ENCODE measurements at regions of chr14 and their contacts with region 1.

Region 1: DNA sequence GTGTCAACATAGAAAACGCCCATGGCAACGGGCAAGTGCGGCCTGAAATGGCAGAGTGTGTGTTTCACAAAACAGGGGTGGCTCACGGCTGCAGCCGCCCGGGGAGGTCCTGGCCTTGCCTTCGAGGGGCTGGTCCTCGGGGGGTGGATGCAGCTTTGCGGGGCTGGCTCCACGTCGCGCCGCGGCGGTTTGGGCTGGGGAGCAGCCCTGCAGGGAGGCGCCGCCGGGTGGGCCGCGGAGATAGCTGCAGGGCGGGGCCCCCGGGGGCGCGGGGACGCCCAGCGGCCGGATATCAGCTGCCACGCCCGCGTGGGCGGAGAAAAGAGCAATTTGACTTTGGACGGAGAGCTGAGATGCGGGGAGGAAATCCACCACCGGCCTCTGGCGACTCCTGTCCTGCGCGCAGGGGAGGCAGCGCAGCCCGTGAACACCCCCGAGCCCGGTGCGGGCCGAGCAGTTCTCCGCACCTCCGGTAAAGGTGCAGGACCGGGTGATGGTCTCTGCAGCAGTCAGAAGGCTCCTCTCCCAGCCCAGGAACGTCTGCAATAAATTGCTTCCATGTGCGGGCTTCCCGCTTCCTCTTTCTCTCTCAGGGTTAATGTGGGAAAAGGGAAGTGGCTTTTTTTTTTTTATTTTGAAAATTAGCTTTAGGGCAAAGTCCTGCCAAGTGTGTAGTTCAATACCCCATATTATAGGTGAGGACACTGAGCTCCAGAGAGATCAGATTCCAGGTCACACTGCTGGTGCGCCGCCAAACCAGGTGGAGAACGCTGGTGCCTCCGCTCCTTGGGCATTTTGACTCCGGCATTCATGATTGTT is 110.5 kb downstream of the ARF6 start:
- DNase-seq: peak; percentile 91
- ATAC-seq: peak; percentile 62
- H3K4me3 ChIP-seq: peak overlapping the region; percentile 21 to 69 (median 59)
- H3K4me3 Mint-ChIP-seq: peak overlapping the region; percentile 91
- H3K27ac ChIP-seq: peak overlapping the region; percentile 98 to 99
- H3K27ac Mint-ChIP-seq: peak overlapping the region; percentile 96
- H3K4me1 ChIP-seq: peaks cover 70 to 75% of the 10 kb centered on the region in 2 donors
- H3K4me1 Mint-ChIP-seq: peaks cover 79% of the 10 kb centered on the region
- H3K27me3 ChIP-seq: no peaks in the 10 kb centered on the region
- H3K27me3 Mint-ChIP-seq: no peaks in the 10 kb centered on the region
- CTCF ChIP-seq: peak; percentile 44

Region 2: GRCh38 chr14:49892636-49893308 is 110.7 kb before region 1 on chr14 and contains the start of gene ARF6:
- CTCF ChIA-PET with region 1: interaction called, 25 read pairs
- POLR2A ChIA-PET with region 1: interaction called, 11 read pairs
- intact Hi-C with region 1: loop called (anchors 1 kb)
- DNase-seq: peak; percentile 98
- ATAC-seq: peak; percentile 87
- H3K4me3 ChIP-seq: peak within 1 kb of the TSS; percentile 74 to 96 (median 89)
- H3K4me3 Mint-ChIP-seq: peak within 1 kb of the TSS; percentile 97
- H3K27ac ChIP-seq: peak within 1 kb of the TSS; percentile 98 to 99
- H3K27ac Mint-ChIP-seq: peak within 1 kb of the TSS; percentile 98
- H3K4me1 ChIP-seq: peaks cover 28 to 35% of the 10 kb centered on the region in 2 donors
- H3K4me1 Mint-ChIP-seq: peaks cover 42% of the 10 kb centered on the region
- H3K27me3 ChIP-seq: no peaks in the 10 kb centered on the region
- H3K27me3 Mint-ChIP-seq: no peaks in the 10 kb centered on the region
- CTCF ChIP-seq: no peak
- total RNA-seq, gene ARF6: 132 and 135 TPM in 2 replicates

Region 3: DNA sequence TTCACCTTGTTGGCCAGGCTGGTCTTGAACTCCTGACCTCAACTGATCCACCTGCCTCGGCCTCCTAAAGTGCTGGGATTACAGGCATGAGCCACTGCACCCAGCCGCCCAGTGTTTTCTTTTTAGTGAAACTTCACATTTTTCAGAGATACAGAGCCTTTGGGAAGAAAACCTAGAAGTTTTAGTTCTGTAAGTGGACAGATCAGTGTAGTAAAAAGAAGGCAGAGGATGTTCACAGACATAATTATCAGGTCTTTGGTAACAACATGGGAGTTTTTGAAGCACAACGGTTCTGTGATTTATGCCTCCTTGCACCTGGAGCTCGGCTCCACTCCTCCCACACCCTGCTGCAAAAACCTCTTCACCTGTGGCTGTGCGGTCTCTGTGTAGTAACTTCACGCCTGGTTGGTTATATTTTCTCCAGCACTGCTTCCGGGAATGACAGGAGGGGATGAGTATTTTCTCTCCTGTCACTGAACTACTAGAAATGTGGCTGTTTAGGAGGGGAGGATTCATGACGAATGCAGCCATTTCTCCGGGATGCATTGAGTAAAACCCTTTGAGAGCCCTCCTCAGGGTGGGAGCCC is 43.5 kb before region 1 on chr14:
- CTCF ChIA-PET with region 1: interaction called, 39 read pairs
- POLR2A ChIA-PET with region 1: interaction called, 18 read pairs
- intact Hi-C with region 1: loop called (anchors 1 kb)
- DNase-seq: peak; percentile 77
- ATAC-seq: peak; percentile 68
- H3K4me3 ChIP-seq: peak overlapping the region in 4 of 5 experiments; percentile 0 to 48 (median 24)
- H3K4me3 Mint-ChIP-seq: peak overlapping the region; percentile 78
- H3K27ac ChIP-seq: peak overlapping the region; percentile 74 to 75
- H3K27ac Mint-ChIP-seq: peak overlapping the region; percentile 86
- H3K4me1 ChIP-seq: peaks cover 60 to 65% of the 10 kb centered on the region in 2 donors
- H3K4me1 Mint-ChIP-seq: peaks cover 70% of the 10 kb centered on the region
- H3K27me3 ChIP-seq: no peaks in the 10 kb centered on the region
- H3K27me3 Mint-ChIP-seq: no peaks in the 10 kb centered on the region
- CTCF ChIP-seq: no peak

Region 4: DNA sequence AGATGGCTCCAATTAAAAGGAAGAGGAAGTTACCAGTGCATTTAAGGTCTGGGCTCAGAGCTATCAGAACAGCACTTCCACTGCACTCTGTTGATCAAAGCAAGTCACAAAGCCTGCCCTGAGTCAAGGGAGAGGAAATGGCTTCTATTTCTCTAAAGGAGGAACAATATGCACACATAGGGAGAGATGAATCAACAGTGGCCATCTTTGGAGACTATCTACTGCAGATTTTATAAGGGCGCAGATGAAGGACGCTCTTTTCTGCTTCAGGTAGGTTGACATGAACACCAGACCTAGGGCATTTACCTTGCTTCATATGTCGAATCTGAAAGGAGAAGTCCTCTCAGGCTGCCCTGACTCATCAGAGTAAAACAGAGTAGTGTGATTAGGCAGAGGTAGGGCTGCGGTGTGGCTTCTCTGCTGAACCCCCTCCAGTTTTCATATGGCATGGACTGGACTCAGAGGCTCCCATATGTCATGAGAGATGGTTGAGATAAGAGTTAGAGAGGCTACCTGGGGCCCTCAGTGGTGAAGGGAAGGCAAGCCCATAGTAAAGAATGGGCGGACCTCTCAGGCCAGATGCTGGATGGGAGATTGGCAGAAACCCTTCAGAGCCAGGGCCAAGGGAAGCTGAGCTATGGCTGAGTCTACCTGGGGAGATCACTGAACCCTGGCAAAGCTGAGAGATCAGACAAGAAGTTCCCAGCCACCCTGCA is 26.1 kb before region 1 on chr14:
- CTCF ChIA-PET with region 1: interaction called, 51 read pairs
- POLR2A ChIA-PET with region 1: interaction called, 45 read pairs
- intact Hi-C with region 1: loop called (anchors 1 kb)
- DNase-seq: peak; percentile 80
- ATAC-seq: peak; percentile 85
- H3K4me3 ChIP-seq: peak overlapping the region; percentile 26 to 69 (median 48)
- H3K4me3 Mint-ChIP-seq: peak overlapping the region; percentile 83
- H3K27ac ChIP-seq: peak overlapping the region; percentile 84 to 87
- H3K27ac Mint-ChIP-seq: peak overlapping the region; percentile 90
- H3K4me1 ChIP-seq: peaks cover 85 to 88% of the 10 kb centered on the region in 2 donors
- H3K4me1 Mint-ChIP-seq: peaks cover 80% of the 10 kb centered on the region
- H3K27me3 ChIP-seq: no peaks in the 10 kb centered on the region
- H3K27me3 Mint-ChIP-seq: no peaks in the 10 kb centered on the region
- CTCF ChIP-seq: no peak

Region 5: DNA sequence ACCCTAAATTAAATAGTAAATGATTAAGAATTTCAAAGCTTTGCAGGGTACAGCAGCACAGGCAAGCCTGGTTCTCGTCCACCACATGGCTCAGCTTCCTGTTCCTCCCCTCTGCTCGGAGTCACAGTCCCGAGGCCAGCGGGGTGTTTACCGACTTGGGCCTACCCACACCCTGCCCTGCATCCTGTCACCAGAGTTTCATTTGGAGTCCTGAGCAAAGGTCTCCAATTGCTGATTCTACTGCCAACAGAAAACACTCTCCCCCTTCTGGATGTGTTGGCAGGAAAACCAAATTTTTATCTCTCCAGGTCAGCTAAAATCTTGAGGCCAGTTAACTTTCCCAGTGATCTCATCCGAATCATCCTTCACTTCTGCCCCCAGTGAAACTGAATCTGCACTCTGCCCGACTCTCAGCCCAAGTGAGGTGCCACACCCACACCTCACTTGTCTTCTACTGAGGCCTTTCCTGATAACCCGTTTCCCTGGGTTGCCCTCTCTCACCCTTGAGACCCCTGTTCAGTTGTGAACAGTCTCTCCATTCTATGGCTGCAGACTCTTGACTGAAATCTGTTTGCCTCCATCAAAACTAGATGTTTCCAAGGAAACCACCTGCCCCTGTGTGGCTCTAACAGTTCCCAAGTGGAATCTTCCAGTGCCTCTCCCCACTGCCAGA is 41.8 kb after region 1 on chr14:
- CTCF ChIA-PET with region 1: interaction called, 15 read pairs
- POLR2A ChIA-PET with region 1: interaction called, 4 read pairs
- intact Hi-C with region 1: loop called (anchors 1 kb)
- DNase-seq: peak; percentile 75
- ATAC-seq: peak; percentile 71
- H3K4me3 ChIP-seq: no peak overlapping the region
- H3K4me3 Mint-ChIP-seq: peak overlapping the region; percentile 49
- H3K27ac ChIP-seq: peak overlapping the region; percentile 92 to 95
- H3K27ac Mint-ChIP-seq: peak overlapping the region; percentile 88
- H3K4me1 ChIP-seq: peaks cover 60 to 62% of the 10 kb centered on the region in 2 donors
- H3K4me1 Mint-ChIP-seq: peaks cover 76% of the 10 kb centered on the region
- H3K27me3 ChIP-seq: no peaks in the 10 kb centered on the region
- H3K27me3 Mint-ChIP-seq: no peaks in the 10 kb centered on the region
- CTCF ChIP-seq: no peak

Region 6: DNA sequence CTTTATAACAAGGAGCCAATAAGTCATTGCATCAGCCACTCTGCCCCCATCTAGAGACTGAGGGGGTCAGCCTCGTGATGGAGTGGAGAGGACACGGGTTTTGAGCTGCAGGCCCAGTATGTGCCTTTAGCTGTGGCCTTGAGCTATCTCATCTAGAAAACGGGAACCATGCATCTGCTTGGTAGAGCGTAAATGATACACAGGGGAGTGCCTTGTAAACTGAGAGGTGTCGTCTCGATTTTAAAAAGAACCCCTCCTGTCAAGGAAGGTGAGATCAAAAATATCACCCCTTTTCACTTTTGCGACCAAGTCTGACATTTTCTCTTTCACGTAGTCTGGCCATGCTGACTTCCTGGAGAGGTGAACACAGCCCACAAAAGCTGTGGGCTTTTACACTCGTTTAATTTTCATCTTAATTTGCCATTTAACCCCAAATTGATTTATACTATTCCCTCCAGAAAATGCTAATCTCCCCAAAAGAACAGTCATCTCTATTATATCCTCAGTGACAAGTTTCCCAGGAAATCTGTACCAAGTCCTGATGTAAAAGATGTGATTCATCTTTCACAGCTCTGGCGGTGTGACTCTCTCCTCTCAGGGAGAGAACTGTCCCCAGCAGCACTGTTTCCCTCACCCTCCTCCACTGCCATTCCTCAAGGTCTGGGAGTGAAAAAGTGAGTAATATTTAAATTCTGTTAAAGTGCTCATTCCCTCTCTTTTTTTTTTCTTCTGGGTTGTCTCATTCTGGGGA is 82.3 kb after region 1 on chr14:
- CTCF ChIA-PET with region 1: interaction called, 6 read pairs
- POLR2A ChIA-PET with region 1: interaction called, 9 read pairs
- intact Hi-C with region 1: loop called (anchors 2 kb)
- DNase-seq: peak; percentile 91
- ATAC-seq: peak; percentile 75
- H3K4me3 ChIP-seq: peak overlapping the region in 3 of 5 experiments; percentile 18 to 48 (median 24)
- H3K4me3 Mint-ChIP-seq: peak overlapping the region; percentile 82
- H3K27ac ChIP-seq: peak overlapping the region; percentile 95 to 100
- H3K27ac Mint-ChIP-seq: peak overlapping the region; percentile 96
- H3K4me1 ChIP-seq: peaks cover 85 to 91% of the 10 kb centered on the region in 2 donors
- H3K4me1 Mint-ChIP-seq: peaks cover 87% of the 10 kb centered on the region
- H3K27me3 ChIP-seq: no peaks in the 10 kb centered on the region
- H3K27me3 Mint-ChIP-seq: no peaks in the 10 kb centered on the region
- CTCF ChIP-seq: no peak

Region 7: DNA sequence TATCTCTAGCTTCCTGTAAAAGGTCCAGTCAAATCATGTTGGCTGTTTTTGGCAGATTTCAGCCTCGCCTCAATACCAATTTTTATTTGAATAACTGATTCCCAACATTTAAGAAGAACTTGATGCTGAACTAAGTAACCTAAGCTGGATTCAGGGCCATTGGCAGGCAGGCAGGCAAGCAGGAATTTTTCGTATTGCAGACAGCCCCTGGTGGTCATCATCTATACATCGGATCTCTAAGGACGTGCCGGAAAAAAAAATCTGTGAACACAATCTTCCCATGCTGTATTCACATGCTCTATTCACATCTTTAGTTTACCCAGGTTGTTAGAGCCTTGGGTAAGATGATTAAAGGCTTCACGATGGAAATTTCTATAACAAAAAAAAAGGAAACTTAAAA is 105.9 kb after region 1 on chr14:
- CTCF ChIA-PET with region 1: interaction called, 17 read pairs
- POLR2A ChIA-PET with region 1: interaction called, 8 read pairs
- intact Hi-C with region 1: loop called (anchors 1 kb)
- DNase-seq: no peak
- ATAC-seq: no peak
- H3K4me3 ChIP-seq: no peak overlapping the region
- H3K4me3 Mint-ChIP-seq: no peak overlapping the region
- H3K27ac ChIP-seq: peak overlapping the region in 1 of 2 donors; percentile 85
- H3K27ac Mint-ChIP-seq: no peak overlapping the region
- H3K4me1 ChIP-seq: peaks cover 28 to 34% of the 10 kb centered on the region in 2 donors
- H3K4me1 Mint-ChIP-seq: peaks cover 40% of the 10 kb centered on the region
- H3K27me3 ChIP-seq: no peaks in the 10 kb centered on the region
- H3K27me3 Mint-ChIP-seq: no peaks in the 10 kb centered on the region
- CTCF ChIP-seq: no peak